CD4-positive, alpha-beta memory T cell (primary cell): ENCODE measurements at regions of chr9 and their contacts with region 1.

Region 1: GRCh38 chr9:14608540-14608939 is 84.7 kb downstream of the ZDHHC21 start:
- DNase-seq: no peak
- H3K4me3 ChIP-seq: no peak overlapping the region
- H3K4me3 Mint-ChIP-seq: no peak overlapping the region
- H3K27ac ChIP-seq: no peak overlapping the region
- H3K27ac Mint-ChIP-seq: no peak overlapping the region
- H3K4me1 ChIP-seq: no peaks in the 10 kb centered on the region
- H3K4me1 Mint-ChIP-seq: no peaks in the 10 kb centered on the region
- H3K27me3 ChIP-seq: no peaks in the 10 kb centered on the region
- H3K27me3 Mint-ChIP-seq: no peaks in the 10 kb centered on the region

Region 2: GRCh38 chr9:15936306-15936921 is 1327.9 kb after region 1 on chr9:
- CTCF ChIA-PET with region 1: no interaction called
- POLR2A ChIA-PET with region 1: no interaction called
- intact Hi-C with region 1: loop called (anchors 5 kb)
- DNase-seq: no peak
- H3K4me3 ChIP-seq: no peak overlapping the region
- H3K4me3 Mint-ChIP-seq: no peak overlapping the region
- H3K27ac ChIP-seq: no peak overlapping the region
- H3K27ac Mint-ChIP-seq: no peak overlapping the region
- H3K4me1 ChIP-seq: no peaks in the 10 kb centered on the region
- H3K4me1 Mint-ChIP-seq: no peaks in the 10 kb centered on the region
- H3K27me3 ChIP-seq: no peaks in the 10 kb centered on the region
- H3K27me3 Mint-ChIP-seq: no peaks in the 10 kb centered on the region